ENCODE measurements at regions of chr19 and their contacts with region 1.

Region 1: GRCh38 chr19:32798201-32798600 is 71.4 kb downstream of the SLC7A9 start:
- DNase-seq: no peak
- H3K4me3 Mint-ChIP-seq: no peak overlapping the region
- H3K27ac Mint-ChIP-seq: no peak overlapping the region
- H3K4me1 Mint-ChIP-seq: peaks cover 23% of the 10 kb centered on the region
- H3K27me3 Mint-ChIP-seq: no peaks in the 10 kb centered on the region

Region 2: GRCh38 chr19:32743021-32743420 is 55.2 kb before region 1 on chr19:
- intact Hi-C with region 1: loop called (anchors 2 kb)
- DNase-seq: no peak
- H3K4me3 Mint-ChIP-seq: no peak overlapping the region
- H3K27ac Mint-ChIP-seq: no peak overlapping the region
- H3K4me1 Mint-ChIP-seq: no peaks in the 10 kb centered on the region
- H3K27me3 Mint-ChIP-seq: peaks cover 12% of the 10 kb centered on the region

Region 3: DNA sequence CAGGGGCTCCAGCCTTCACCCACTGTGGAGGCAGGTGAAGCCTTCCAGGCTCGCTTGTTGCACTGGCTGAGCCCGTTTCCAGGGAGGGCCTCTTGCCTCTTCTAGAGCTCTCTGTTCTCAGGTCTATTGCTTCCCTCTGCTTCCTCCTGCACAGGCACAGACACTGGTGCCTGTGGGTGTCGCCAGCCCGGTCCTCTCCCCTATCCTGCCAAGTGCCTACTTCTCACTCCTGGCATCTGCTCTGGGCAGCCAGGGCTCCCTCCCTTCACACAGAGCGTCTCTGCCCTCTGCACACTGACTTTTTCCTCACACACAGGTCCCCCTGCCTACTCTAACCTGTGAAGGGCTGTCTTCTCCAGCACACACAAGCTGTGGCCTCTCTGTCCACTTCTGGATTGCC is 11.1 kb after region 1 on chr19:
- intact Hi-C with region 1: loop called (anchors 1 kb)
- DNase-seq: no peak
- H3K4me3 Mint-ChIP-seq: no peak overlapping the region
- H3K27ac Mint-ChIP-seq: no peak overlapping the region
- H3K4me1 Mint-ChIP-seq: peaks cover 14% of the 10 kb centered on the region
- H3K27me3 Mint-ChIP-seq: peaks cover 5% of the 10 kb centered on the region

Region 4: GRCh38 chr19:32843716-32844245 is 45.6 kb after region 1 on chr19:
- intact Hi-C with region 1: no loop called
- DNase-seq: no peak
- H3K4me3 Mint-ChIP-seq: no peak overlapping the region
- H3K27ac Mint-ChIP-seq: no peak overlapping the region
- H3K4me1 Mint-ChIP-seq: no peaks in the 10 kb centered on the region
- H3K27me3 Mint-ChIP-seq: peaks cover 8% of the 10 kb centered on the region

Measured in activated T-helper 1 cell treated with anti-CD3 and anti-CD28 coated beads, Interleukin-12 subunit alpha, Interleukin-12 subunit beta, Interleukin-2, Interleukin-4 antibody, amounts not matched to agents 30 ng/mL and 10 ng/mL and 1 ng/mL, durations not matched to agents 14 hours and 24 hours and 36 hours (primary cell).